ENCODE measurements at regions of chr11 and their contacts with region 1.

Region 1: DNA sequence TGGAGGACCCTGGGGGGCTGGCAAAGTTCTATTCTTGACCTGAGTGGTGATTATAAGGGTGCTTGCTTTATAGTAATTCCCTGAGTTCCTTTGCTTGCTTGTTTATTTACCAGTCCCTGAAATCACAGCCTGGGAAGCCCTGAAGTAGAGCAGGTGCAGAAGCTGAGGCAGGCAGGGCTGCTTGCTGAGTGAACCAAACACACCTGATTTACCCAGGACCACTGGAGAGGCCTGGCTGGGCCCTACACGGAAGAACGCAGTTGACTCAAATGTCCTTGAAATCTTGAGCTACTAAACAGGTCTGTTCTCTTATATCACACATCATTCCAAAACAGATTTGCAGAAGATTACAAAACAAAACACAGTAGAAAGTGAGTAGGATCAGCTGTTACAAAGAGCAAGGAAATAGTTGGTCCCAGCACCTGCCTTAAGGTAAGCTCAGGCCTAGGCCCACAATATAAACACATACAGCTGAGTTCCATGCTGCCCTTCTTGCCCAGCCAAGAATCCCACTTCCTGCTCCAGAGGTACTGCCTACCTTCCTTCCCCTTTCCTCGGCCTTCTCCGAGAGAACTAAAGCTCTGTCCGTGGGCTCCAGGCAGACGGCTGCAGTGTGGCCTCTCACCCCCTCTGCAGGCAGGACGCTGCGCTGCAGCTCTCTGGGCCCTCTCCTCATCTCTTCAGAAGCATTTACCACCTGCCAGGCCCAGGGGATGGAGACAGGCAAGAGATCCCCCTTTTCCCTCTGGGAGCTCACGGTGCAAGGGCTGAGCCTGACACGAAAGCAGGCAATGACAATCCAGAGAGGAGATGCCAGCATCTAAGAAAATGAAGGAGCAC is 46.1 kb upstream of the SCUBE2 start:
- DNase-seq: peak; percentile 93
- H3K4me3 ChIP-seq: no peak overlapping the region
- H3K27ac ChIP-seq: peak overlapping the region in 2 of 4 donors; percentile 22 to 70
- H3K4me1 ChIP-seq: peaks cover 16 to 33% (median 28%) of the 10 kb centered on the region in 4 donors
- H3K27me3 ChIP-seq: no peaks in the 10 kb centered on the region
- CTCF ChIP-seq: peak; percentile 86 to 100 (median 95)
- EP300 ChIP-seq: no peak
- POLR2A ChIP-seq: no peak

Region 2: GRCh38 chr11:8917157-8917825 is 220.2 kb before region 1 on chr11:
- intact Hi-C with region 1: loop called (anchors 5 kb)
- DNase-seq: no peak
- H3K4me3 ChIP-seq: peak overlapping the region; percentile 2 to 31 (median 24)
- H3K27ac ChIP-seq: peak overlapping the region; percentile 65 to 79 (median 74)
- H3K4me1 ChIP-seq: peaks cover 36 to 59% (median 56%) of the 10 kb centered on the region in 4 donors
- H3K27me3 ChIP-seq: no peaks in the 10 kb centered on the region
- CTCF ChIP-seq: no peak
- EP300 ChIP-seq: no peak
- POLR2A ChIP-seq: no peak

Region 3: GRCh38 chr11:9015677-9016076 is 121.8 kb before region 1 on chr11:
- intact Hi-C with region 1: loop called (anchors 1 kb)
- DNase-seq: peak; percentile 93
- H3K4me3 ChIP-seq: no peak overlapping the region
- H3K27ac ChIP-seq: no peak overlapping the region
- H3K4me1 ChIP-seq: peaks cover 10 to 25% (median 15%) of the 10 kb centered on the region in 4 donors
- H3K27me3 ChIP-seq: no peaks in the 10 kb centered on the region
- CTCF ChIP-seq: peak; percentile 68 to 80 (median 73)
- EP300 ChIP-seq: no peak
- POLR2A ChIP-seq: no peak

Measured in esophagus muscularis mucosa (tissue), 4 donors.